HCT116 (cell line): ENCODE measurements at regions of chr3 and their contacts with region 1.

Region 1: DNA sequence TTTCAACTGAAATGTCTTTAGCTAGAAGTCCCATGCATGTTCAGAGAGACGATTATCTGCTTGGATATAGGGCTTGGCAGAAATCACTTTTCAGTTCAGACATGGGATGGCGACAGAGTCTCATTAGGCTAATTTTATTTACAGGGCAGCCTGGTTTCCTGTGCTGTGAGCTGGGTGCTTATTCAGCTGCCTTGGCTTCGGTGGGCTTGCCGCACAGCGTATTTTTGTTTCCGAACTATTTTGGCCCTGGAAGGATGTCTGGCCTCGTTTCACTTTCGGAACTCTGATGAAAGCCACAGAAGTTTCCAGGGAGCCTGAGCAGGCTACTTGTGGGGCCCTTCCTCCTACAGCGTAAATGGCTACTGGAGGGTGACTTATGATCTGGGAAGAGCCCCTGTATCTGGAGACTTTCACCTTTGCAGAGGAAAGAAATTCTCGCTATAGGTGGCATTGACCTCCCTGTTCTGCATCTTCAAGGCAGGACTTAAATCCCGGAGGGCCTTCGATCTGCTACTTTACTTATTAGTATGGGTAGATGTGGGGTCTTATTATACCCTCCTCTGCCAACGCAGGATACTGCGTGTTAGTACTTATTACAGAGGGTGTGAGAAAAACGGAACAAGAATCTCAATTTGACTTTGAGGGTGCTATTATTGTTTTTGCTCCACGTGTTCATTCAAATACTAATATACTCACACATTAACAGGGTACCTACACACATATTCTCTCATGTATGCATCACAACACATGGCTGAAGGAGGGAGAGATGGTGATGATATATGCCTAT is 364.0 kb upstream of the RBMS3 start:
- DNase-seq: no peak
- ATAC-seq: peak; percentile 63; the same call in 1 of the 2 replicates
- H3K4me3 ChIP-seq: no peak overlapping the region
- H3K27ac ChIP-seq: no peak overlapping the region
- H3K4me1 ChIP-seq: no peaks in the 10 kb centered on the region
- H3K27me3 ChIP-seq: no peaks in the 10 kb centered on the region
- CTCF ChIP-seq: 0 out of 6 replicates have a peak, but pooled peaks of 2 of the 3 experiments have one; percentile 9 to 23
- POLR2A ChIP-seq: no peak
- RAD21 ChIP-seq: peak; percentile 43

Region 2: DNA sequence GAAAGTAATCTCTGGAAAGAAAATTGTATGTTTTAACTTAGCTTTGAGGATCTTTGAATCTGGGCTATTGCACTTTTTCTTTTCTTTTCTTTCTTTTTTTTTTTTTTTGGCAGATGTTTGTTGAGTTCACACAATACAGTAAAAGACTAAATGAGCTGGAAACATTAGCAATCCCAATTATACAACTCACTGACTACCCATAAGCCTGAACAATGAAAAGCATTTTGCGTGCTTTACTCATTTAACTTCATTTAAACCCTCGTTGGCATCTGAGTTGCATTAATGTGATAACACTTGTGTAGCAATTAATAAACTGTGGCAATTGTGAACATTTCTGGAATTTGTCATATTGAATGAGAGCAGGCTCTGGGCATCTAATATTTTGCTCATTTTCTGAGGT is 94.5 kb after region 1 on chr3:
- CTCF ChIA-PET with region 1: no interaction called
- POLR2A ChIA-PET with region 1: no interaction called
- RAD21 ChIA-PET with region 1: no interaction called
- intact Hi-C with region 1: no loop called
- DNase-seq: no peak
- ATAC-seq: no peak
- H3K4me3 ChIP-seq: no peak overlapping the region
- H3K27ac ChIP-seq: no peak overlapping the region
- H3K4me1 ChIP-seq: no peaks in the 10 kb centered on the region
- H3K27me3 ChIP-seq: no peaks in the 10 kb centered on the region
- CTCF ChIP-seq: no peak
- POLR2A ChIP-seq: no peak
- RAD21 ChIP-seq: no peak

Region 3: DNA sequence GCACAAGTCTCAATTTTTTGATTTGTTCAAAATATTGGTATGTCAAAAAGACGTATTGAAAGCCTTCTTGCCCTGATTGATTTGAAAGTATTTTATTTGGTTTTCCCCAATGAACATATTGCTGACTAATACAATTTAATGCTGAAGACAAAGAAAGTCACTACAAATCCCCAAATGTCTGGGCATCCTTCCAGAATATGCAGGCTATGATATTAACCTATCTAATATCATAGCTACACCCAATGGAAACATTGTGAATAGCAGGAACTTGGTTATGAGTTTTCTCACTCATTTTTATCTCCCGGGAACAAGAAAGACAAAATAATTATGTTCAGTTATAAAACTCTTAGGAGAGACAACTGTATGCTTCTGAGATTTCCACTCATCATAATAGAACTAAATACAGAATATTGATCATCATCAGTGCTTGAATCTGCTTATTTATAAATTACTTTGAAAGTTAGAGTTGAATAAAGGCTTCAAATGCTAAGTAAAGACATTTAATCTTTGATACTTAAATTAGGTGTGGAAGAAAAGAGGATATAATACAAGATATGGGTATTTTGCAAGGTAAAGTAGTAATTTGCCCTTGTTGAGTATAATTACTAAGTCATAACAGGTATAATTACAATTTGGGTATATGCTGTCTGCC is 847.8 kb after region 1 on chr3:
- CTCF ChIA-PET with region 1: interaction called, 3 read pairs
- POLR2A ChIA-PET with region 1: no interaction called
- RAD21 ChIA-PET with region 1: interaction called in 1 of 2 experiments, 4 read pairs
- intact Hi-C with region 1: loop called (anchors 2 kb)
- DNase-seq: peak; percentile 16
- ATAC-seq: no peak; the same call in 1 of the 2 replicates
- H3K4me3 ChIP-seq: no peak overlapping the region
- H3K27ac ChIP-seq: no peak overlapping the region
- H3K4me1 ChIP-seq: no peaks in the 10 kb centered on the region
- H3K27me3 ChIP-seq: no peaks in the 10 kb centered on the region
- CTCF ChIP-seq: peak; percentile 22 to 51 (median 35); a peak in 4 of 6 replicates
- POLR2A ChIP-seq: no peak
- RAD21 ChIP-seq: peak; percentile 63